ENCODE measurements at regions of chr2 and their contacts with region 1.

Region 1: DNA sequence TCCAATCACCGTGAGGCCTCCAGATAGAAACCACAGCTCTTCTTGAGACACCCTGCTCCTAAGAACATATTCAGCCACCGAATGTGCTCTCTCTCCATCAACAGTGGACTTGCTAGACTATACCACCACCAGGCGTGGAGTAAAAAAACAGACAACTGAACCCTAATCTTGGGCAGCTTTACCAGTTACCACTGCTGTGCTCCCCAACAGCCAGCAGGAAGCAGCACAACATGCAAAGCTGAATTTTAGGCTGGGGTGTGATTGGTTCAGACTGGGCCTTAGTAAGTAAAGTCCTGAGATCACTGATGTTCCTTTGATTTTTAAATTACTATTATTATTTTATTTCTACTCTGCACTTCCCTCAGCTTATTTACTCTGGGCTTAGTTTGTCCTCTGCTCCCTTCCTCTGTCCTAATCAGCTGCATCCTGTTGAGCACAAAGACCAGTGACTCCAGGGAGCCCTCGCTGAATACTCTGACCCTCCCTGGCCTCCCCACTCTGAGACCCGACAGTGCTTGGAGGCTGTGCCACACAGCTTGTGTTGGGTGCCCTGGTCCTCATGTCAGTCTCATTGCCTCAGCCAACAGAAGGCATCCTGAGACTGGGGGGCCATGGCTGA is 21.9 kb downstream of the MRPL35 start:
- DNase-seq: no peak
- ATAC-seq: no peak

Region 2: GRCh38 chr2:86274918-86275275 is 53.7 kb after region 1 on chr2:
- intact Hi-C with region 1: loop called (anchors 2 kb)
- DNase-seq: peak; percentile 74
- ATAC-seq: peak; percentile 62

Region 3: DNA sequence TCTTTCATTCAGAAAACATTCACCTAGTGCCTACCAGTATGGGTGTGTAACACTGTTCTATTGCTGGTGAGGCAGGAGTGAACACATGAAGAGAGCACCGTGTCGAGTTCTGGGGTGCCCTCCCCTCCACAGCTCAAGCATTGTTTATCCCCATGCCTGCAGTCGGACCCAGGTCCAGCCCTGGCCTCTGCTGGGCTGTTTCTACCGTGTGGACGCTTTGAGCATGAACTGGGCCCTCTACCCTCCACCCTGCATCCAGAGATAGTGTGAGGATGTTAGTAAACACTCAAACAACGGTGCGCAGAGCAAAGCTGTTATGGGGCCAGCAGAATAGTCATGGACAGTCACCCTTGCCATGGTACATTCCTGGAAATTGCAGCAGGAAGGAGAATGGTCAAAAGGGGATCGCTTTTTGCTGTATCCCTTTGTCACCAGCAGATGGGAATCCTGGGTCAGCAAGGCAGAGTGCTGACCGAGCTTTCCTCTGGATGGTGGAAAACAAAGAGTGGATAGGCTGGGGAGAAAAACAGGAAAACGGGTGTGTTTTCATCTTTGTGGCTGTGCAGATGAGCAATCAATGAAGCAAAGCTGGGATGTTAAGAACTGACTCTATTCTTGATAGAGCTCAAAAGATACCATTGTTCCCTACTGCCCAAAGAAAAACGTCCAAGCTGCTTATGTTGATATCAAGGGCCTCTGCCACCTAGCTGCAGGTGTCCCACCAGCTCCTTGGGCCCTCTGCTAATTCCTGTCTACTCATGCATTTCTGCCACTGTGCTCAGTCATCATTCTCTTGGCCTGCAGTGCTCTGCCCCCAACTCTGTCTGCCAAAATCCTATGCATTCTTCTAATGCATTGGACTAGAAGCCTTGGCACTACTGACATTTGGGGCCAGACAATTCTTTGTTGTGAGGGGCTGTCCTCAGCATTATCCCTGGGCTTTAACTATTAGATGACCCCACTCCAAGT is 77.5 kb after region 1 on chr2:
- intact Hi-C with region 1: loop called (anchors 5 kb)
- DNase-seq: no peak
- ATAC-seq: peak; percentile 52

Region 4: DNA sequence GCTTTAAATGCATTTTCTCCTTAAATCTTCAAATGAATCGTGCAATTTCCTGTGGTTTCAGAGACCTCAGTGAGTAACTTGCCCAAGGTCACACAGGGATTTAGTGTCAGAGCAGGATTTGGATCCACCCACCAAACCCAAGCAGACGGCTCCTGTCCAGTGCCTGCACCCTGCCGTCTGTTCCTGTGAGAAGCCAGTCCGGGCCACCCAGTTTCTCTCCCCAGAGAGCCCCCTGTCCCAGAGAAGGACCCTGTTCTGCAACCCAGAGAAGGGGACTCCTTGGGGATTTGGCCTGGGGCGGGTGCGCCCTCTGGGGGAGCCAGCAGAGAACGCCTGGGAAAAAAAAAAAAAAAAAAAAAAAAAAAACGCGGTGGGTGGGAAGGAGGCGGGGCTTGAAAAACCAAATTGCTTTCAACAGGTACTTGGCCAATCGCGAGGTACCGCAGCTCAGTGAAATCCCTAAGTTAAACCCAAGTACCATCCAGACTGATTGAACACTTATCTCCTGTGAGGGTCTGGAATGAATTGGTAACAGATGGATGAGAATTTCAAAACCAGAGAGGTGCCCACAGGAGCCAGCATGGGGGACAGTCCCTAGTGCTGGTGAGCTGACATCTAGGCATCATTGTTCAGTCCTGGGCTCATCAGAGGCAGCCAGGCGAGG is 147.1 kb after region 1 on chr2:
- intact Hi-C with region 1: loop called (anchors 1 kb)
- DNase-seq: no peak
- ATAC-seq: peak; percentile 52

Region 5: DNA sequence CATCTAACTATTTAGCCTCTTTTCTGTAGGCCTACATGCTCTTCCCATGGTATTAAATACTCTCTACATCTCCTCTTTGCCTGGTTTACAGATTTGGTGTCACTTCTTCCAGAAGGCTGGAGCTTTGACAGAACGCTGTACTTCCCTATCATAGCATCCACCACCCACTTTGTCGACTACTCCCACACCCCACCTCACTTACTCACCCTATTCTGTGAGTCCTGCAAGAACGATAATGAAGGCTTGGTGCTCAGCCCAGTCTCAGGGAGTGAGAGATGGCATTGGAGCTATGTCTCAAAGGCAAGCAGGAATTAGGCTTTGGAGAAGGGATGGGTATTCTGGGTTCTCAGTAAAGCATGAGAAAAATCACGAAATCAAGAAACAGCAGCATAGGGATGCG is 199.7 kb after region 1 on chr2:
- intact Hi-C with region 1: no loop called
- DNase-seq: no peak
- ATAC-seq: no peak